ENCODE measurements at regions of chr10 and their contacts with region 1.

Region 1: DNA sequence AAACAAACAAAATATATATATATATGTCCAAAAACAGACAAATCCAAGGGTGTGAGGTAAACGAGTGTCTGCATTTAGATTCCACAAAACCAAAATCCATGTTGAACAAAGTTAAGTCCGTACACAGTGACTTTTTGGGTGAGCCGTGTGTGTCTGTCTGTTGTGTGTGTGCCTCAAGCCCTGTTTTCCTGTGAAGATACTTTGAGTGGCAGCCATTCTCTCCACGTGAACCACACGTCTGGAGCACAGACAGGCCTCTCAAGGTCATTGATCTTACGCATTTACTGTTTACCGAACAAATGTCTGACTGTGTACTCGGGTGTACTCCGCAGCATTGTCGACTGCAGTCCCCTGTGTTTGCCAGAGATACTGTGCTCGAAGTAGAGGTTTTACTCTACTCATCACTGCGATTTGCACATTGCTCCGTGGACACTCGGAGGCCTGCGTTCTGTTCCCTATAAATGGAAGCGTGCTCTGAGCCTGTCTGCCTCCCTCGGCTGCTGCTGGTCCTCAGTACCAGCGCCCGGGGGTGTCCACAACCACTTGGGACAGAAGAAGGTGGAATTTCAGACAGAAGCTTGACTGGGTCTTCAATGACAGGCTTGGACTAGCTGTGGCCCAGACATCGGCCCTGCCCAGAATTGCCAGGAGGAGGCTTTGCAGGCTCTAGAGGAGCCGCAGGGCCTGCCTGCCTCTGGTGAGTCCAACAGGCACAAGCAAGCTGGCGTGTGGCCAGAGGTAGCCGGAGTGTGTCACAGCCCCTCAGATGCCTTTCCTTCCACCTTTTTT is 22.1 kb downstream of the CYP17A1 start:
- DNase-seq: peak in 1 of 4 experiments; percentile 34
- ATAC-seq: peak; percentile 26
- H3K4me3 ChIP-seq: no peak overlapping the region
- H3K27ac ChIP-seq: peak overlapping the region; percentile 91
- H3K4me1 ChIP-seq: peaks cover 26 to 33% of the 10 kb centered on the region in 2 experiments
- H3K27me3 ChIP-seq: no peaks in the 10 kb centered on the region
- CTCF ChIP-seq: no peak
- EP300 ChIP-seq: no peak
- POLR2A ChIP-seq: no peak
- RAD21 ChIP-seq: no peak

Region 2: DNA sequence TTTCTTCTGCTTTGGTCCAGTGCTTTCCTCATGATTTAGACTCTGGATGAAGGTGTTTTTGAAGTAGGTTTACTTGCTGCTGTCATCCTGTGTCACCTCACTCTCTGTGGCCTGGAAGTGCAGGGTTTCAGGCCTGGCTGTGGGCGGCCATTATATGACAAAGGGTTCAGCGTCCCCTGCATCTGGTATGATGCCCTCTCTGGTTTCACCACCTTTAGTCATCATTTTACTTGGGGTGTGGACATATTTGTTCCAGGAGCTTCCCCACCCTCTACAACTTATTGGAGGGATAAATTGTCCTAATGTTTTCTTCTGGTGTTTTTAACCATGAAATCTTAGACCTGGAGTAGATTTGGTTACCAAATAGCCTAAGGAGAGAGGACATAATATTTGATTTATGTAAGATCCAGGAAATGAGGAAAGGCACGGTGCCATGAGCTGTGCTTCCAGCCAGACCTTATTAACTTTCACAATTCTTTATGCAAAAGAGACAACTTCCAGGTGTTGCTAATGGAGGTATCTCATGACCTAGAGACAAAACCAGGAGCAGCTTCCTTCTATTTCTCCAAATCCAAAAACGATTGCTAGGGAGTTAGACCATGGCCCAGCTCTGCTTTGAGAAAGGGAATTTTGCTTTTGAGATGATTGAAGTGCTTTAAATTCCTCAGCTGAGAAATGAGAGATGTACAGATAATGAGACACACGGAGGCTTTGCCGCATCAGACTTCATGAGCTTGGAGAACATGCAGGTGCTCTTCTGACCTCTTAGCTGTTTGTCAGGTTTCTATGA is 50.5 kb before region 1 on chr10:
- CTCF ChIA-PET with region 1: interaction called, 3 read pairs
- POLR2A ChIA-PET with region 1: no interaction called
- in situ Hi-C with region 1: no loop called
- intact Hi-C with region 1: loop called (anchors 5 kb)
- DNase-seq: no peak
- ATAC-seq: no peak
- H3K4me3 ChIP-seq: no peak overlapping the region
- H3K27ac ChIP-seq: no peak overlapping the region
- H3K4me1 ChIP-seq: peaks cover 8 to 34% of the 10 kb centered on the region in 2 experiments; a peak in 3 of 5 replicates
- H3K27me3 ChIP-seq: no peaks in the 10 kb centered on the region
- CTCF ChIP-seq: no peak
- EP300 ChIP-seq: no peak
- POLR2A ChIP-seq: no peak
- RAD21 ChIP-seq: no peak

Region 3: DNA sequence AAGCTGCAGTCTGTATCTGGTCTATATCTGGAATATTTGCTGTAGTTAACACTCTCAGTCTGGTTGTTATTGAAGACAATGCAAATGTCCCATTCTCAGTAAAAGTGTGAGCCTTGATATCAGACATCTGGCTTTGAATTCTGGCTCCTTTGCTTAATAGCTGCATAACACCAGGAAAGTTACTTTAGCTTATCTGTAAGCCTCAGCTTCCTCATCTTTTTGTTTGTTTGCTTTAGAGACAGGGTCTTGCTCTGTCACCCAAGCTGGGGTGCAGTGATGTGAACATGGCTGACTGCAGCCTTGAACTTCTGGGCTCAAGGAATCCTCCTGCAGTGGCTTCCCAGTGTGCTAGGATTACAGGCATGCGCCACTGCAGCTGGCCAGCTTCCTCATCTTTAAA is 144.3 kb after region 1 on chr10:
- CTCF ChIA-PET with region 1: no interaction called
- POLR2A ChIA-PET with region 1: no interaction called
- in situ Hi-C with region 1: no loop called
- intact Hi-C with region 1: no loop called
- DNase-seq: peak in 2 of 4 experiments; percentile 11 to 43
- ATAC-seq: peak; percentile 33; the same call in 2 of the 3 replicates
- H3K4me3 ChIP-seq: no peak overlapping the region
- H3K27ac ChIP-seq: no peak overlapping the region; the same call in 2 of the 3 replicates
- H3K4me1 ChIP-seq: peaks cover 0 to 15% of the 10 kb centered on the region in 2 experiments; a peak in 2 of 5 replicates
- H3K27me3 ChIP-seq: no peaks in the 10 kb centered on the region
- CTCF ChIP-seq: no peak
- EP300 ChIP-seq: no peak
- POLR2A ChIP-seq: no peak
- RAD21 ChIP-seq: no peak

Measured in K562 (cell line).